SK-MEL-5 (cell line): ENCODE measurements at regions of chr7 and their contacts with region 1.

Region 1: DNA sequence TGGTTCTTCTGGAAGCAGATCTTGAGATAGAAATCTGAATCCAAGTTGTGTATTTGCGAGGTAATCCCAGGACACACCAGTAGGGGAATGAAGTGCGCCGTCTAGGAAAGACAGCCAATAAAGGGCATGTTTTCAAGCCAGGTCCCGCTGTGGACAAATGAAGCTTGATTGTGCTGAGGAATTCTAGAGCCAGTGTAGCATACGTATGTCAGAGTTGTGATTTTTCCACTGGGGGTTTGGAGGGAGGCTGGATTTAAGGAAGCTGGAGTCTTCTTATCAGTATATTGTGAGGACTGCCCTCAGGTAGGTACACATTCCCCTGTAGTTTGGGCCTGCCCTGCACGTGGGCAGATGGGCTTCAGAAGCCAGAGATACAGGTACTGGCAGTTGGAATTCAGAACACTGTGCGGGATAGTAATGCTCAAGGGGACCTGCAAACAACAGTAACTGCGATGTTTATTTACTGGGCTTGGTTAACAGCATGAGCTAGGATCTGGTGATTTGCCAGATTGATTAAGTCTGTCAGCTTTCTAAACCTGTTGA is 50.9 kb downstream of the GALNT11 start:
- DNase-seq: peak; percentile 80

Region 2: GRCh38 chr7:151570366-151570915 is 506.0 kb before region 1 on chr7:
- in situ Hi-C with region 1: no loop called
- DNase-seq: peak; percentile 46

Region 3: DNA sequence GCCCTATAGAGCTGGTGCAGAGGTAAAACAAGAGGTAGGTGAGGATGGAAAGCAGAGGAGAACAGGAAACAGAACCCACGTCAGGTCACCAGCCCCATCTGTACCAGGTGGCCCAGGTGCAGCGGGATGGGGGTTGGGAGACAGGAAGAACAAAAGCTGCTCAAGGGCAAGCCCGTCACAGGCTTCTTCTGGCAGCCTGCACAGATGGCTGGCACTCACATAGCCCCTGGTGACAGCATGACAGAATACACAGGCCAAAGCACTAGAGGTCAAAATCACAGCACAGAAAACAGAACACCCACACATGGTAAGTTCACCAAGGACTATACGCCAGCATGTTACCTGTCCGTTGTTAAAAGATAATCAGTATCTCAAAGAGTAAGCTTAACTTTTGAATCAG is 75.9 kb after region 1 on chr7:
- in situ Hi-C with region 1: loop called (anchors 5 kb)
- DNase-seq: no peak